ENCODE measurements at regions of chr17 and their contacts with region 1.

Region 1: DNA sequence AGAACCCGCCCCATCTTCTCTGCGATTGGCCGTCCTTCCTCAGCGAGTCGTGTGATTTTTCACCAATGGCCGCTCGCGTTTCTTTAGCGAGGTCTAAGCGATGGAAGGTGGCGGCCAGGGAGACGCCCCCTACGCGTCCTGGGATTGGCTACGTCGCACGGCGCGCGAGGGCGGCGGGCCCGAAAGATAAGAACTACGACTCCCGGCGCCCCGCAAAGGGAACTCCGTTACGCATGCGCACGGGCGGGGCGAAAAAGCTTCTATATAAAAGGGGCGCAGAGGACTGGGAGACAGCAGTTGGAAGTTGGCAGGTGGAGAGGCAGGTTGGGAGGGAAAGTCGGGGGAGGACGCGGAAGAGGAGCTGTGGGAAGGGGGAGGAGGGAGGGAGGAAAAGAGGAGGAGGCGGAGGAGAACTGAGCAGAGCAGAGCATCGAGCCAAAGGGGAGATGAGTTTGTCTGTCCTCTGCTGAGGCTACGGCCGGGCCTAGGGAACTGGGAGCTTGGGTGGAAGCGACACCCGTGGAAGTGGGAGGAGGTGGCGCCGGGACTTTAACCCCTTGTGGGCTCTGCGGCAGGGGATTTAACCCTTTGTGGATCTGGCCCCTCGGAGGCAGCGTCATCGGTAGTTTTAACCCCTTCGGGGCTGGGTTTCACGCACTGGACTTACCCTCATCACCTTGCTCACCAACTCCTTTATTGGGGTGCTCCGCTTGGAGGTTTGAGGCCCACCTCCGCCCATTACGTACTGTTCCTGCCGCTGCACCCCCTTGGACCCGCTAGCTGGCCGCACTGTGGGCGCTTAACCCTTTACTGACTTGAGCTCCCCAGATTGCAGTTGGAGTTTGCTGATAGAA is at the start of gene HEXIM1:
- DNase-seq: peak; percentile 99
- ATAC-seq: peak; percentile 75
- H3K4me3 Mint-ChIP-seq: peak within 1 kb of the TSS; percentile 98
- H3K27ac Mint-ChIP-seq: peak within 1 kb of the TSS; percentile 100
- H3K4me1 Mint-ChIP-seq: peaks cover 34% of the 10 kb centered on the region
- H3K27me3 Mint-ChIP-seq: peaks cover 5% of the 10 kb centered on the region; the same call in 1 of the 2 replicates
- CTCF ChIP-seq: no peak
- total RNA-seq, gene HEXIM1: 29.6 to 36.9 TPM (median 35.2 TPM) in 3 replicates

Region 2: DNA sequence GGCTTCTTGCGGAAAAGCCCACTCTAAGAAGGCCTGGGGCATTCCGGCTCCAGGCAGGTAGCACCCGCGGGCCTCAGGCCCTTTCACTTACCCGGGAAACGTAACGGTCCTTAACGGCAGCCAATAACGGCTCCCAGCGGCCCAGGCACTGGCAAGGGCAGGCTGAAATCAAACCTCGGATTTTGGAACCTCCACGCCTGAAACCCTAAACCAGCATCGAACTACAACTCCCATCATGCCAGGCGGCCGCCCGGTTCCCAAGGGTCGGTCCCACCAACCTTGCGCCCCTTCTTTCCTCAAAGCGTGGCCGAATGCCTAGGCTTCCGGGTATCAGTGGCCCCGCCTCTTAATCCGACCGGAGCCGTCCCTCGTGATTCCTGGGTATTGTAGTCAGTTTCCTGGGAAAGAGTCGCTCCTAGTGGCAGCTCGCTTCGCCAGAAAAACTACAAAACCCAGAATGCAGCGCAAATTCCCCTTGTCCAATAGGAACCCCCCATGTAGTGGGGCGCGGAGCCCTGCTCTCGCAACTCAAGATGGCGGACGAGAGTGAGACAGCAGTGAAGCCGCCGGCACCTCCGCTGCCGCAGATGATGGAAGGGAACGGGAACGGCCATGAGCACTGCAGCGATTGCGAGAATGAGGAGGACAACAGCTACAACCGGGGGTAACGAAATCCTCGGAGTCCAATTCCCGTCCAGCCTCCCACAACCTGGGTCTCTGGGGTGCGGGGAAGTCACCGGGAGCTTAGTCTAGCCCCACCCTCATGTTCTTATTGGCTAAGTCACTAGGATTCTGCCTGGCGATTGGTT is 87.4 kb before region 1 on chr17 and contains the start of gene NMT1:
- CTCF ChIA-PET with region 1: no interaction called
- POLR2A ChIA-PET with region 1: interaction called, 11 read pairs
- DNase-seq: peak; percentile 98
- ATAC-seq: peak; percentile 96
- H3K4me3 Mint-ChIP-seq: peak within 1 kb of the TSS; percentile 99
- H3K27ac Mint-ChIP-seq: peak within 1 kb of the TSS; percentile 100
- H3K4me1 Mint-ChIP-seq: peaks cover 4% of the 10 kb centered on the region
- H3K27me3 Mint-ChIP-seq: no peaks in the 10 kb centered on the region
- CTCF ChIP-seq: no peak
- total RNA-seq, gene NMT1: 152 to 162 TPM (median 153 TPM) in 3 replicates

Region 3: GRCh38 chr17:45172454-45173286 is 24.3 kb after region 1 on chr17:
- CTCF ChIA-PET with region 1: interaction called, 96 read pairs
- POLR2A ChIA-PET with region 1: interaction called, 75 read pairs
- DNase-seq: peak; percentile 38
- ATAC-seq: peak; percentile 20
- H3K4me3 Mint-ChIP-seq: peak overlapping the region; percentile 5; the same call in 1 of the 2 replicates
- H3K27ac Mint-ChIP-seq: peak overlapping the region; percentile 98
- H3K4me1 Mint-ChIP-seq: peaks cover 29% of the 10 kb centered on the region
- H3K27me3 Mint-ChIP-seq: no peaks in the 10 kb centered on the region
- CTCF ChIP-seq: no peak

Region 4: DNA sequence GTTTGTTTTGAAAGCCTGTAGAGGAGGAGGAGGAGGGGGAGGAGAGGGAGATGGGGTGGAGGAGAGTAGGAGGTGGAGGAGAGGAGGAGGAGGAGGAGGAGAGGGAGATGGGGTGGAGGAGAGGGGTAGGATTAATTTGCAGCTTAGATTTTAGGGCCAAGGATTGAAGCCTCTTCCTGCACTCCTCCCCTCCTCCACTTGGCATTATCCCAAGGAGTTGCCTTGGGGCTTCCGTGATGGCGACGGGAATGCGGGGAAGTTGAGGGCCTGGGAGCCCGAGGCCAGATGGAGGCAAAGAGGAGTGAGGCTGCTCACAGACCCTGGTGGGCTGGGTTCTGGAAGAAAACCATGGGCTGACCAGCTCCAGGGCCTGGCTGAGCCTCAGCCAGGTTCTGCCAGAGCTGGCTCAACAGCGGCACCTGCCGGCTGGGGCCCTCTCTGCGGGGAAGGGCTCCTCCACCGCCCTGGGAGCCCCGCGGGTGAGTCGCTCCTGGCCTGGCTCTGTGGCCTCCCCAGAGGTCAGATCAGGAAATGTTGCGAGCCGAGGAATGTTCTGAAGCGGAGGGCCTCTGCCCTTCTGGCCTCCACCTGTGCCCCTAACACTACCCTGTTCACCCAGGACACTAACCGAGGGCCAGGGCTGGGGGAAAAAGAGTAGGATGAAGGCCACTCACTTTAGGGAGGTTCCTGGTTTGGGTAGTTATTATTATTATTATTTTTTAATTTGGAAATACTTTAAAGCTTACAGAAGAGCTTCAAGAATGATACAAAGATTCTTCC is 49.3 kb after region 1 on chr17:
- CTCF ChIA-PET with region 1: interaction called, 275 read pairs
- POLR2A ChIA-PET with region 1: interaction called, 61 read pairs
- DNase-seq: peak; percentile 99
- ATAC-seq: peak; percentile 98
- H3K4me3 Mint-ChIP-seq: no peak overlapping the region
- H3K27ac Mint-ChIP-seq: peak overlapping the region; percentile 84
- H3K4me1 Mint-ChIP-seq: peaks cover 18% of the 10 kb centered on the region
- H3K27me3 Mint-ChIP-seq: peaks cover under 1% of the 10 kb centered on the region; the same call in 1 of the 2 replicates
- CTCF ChIP-seq: peak; percentile 94

Region 5: GRCh38 chr17:45241328-45242011 is 93.1 kb after region 1 on chr17:
- CTCF ChIA-PET with region 1: interaction called, 25 read pairs
- POLR2A ChIA-PET with region 1: interaction called, 3 read pairs
- DNase-seq: peak; percentile 79
- ATAC-seq: peak; percentile 55
- H3K4me3 Mint-ChIP-seq: peak overlapping the region; percentile 77
- H3K27ac Mint-ChIP-seq: no peak overlapping the region
- H3K4me1 Mint-ChIP-seq: peaks cover 12% of the 10 kb centered on the region
- H3K27me3 Mint-ChIP-seq: peaks cover 48% of the 10 kb centered on the region
- CTCF ChIP-seq: no peak